Astrocyte of the cerebellum (primary cell): ENCODE measurements at regions of chr11 and their contacts with region 1.

Region 1: GRCh38 chr11:71339396-71339881 is 87.1 kb upstream of the SHANK2 start:
- DNase-seq: no peak
- H3K4me3 ChIP-seq: no peak overlapping the region
- CTCF ChIP-seq: no peak

Region 2: DNA sequence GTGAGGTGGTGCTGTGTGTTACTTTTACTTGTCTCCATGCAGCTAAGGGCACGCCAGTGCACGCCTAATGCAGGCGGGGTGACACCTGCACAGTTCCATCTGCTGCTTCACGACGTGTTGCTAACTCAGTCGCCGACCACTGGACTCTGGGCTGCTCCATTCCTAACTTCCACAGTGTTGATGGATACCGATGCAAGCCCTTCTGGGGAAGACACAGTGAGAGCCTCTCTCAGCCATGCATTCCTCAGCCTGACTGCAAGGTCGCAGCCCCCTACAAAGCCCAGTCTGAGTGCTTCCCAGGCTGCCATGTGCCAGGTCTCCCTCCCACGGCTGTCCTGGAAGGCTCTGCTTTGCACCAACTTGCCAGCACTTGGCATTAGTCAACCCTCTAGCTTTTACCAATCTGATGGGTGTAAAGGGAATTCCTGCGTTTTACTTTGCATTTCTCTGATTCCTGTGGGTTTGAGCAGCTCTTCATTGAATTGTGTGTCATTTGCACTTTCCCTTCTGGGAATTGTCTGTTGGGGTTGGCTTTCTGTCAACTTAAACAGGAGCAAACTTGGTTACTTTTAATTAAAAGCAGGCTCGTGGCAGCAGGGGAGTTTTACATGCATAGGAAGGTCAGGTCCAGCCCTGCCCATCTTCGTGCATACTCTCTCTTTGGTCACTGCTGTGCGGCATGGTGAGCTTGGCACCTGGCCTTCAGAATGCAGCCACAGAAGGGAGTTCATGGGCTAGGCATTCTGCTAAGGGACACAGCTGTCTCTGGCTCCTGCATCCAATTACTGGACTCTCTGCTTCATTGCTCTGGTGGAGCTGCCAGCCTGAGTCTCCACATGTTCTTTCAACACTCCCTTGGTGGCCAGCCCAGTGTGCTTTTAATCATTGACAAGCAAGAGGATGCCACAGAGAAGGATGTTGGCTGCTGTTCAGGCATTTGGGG is 52.5 kb before region 1 on chr11:
- in situ Hi-C with region 1: no loop called
- DNase-seq: peak; percentile 98
- H3K4me3 ChIP-seq: no peak overlapping the region
- CTCF ChIP-seq: no peak

Region 3: DNA sequence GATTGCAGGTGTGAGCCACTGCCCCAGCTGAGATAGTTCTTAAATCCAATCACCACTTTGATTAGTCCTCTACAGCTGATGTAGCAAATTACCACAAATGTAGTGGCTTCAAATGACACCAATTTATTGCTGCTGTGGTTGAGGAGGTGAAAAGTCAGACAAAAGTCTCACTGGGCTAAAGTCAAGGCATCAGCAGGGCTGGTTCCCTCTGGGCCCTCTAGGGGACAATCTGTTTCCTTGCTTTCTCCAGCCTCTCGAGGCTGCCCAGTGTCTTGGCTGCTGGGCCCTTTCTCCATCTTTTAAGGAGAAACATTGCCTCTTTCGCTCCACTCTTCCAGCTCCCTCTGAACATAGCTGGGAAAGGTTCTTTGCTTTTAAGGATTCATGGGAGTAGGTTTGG is 36.5 kb before region 1 on chr11:
- in situ Hi-C with region 1: loop called (anchors 5 kb)
- DNase-seq: no peak
- H3K4me3 ChIP-seq: no peak overlapping the region
- CTCF ChIP-seq: peak; percentile 7